IMR-90 (cell line): ENCODE measurements at regions of chr10 and their contacts with region 1.

Region 1: DNA sequence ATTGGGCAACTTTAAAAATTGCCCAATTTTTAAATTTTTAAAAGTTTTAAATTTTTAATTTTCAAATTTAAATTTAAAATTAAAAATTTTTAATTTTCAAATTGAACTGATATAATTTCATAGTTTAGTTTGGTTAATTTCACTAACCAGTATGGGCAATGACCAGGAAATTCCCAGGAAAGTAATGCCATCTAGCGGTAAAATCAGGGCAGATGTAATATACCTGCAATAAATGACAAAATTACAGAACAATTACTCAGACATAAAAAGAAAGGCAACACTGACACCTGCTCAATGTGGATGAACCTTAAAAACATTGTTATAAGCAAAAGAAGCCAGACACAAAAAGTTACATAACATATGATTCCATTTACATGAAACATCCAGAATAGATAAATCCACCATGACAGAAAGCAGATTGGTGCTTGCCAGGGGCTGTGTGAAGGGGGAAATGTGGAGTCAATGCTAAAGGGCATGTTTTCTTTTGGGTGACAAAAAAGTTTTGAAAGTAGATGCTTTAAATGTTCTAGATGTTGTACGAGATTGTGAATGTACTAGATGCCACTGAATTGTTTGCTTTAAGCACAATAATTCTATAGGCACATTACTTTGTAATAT is 28.6 kb upstream of the SLC16A12 start:
- DNase-seq: peak; percentile 60
- ATAC-seq: peak; percentile 75
- H3K4me3 ChIP-seq: no peak overlapping the region
- H3K27ac ChIP-seq: no peak overlapping the region
- H3K4me1 ChIP-seq: no peaks in the 10 kb centered on the region; the same call in 1 of the 2 replicates
- H3K27me3 ChIP-seq: no peaks in the 10 kb centered on the region
- CTCF ChIP-seq: peak; percentile 85
- POLR2A ChIP-seq: no peak; the same call in 1 of the 2 replicates
- RAD21 ChIP-seq: peak; percentile 95

Region 2: GRCh38 chr10:89466599-89467035 is 97.4 kb before region 1 on chr10:
- CTCF ChIA-PET with region 1: interaction called, 7 read pairs
- POLR2A ChIA-PET with region 1: no interaction called
- dilution Hi-C with region 1: no loop called
- in situ Hi-C with region 1: no loop called
- intact Hi-C with region 1: loop called (anchors 1 kb)
- DNase-seq: peak; percentile 60
- ATAC-seq: peak; percentile 90
- H3K4me3 ChIP-seq: no peak overlapping the region
- H3K27ac ChIP-seq: no peak overlapping the region
- H3K4me1 ChIP-seq: peaks cover 5% of the 10 kb centered on the region
- H3K27me3 ChIP-seq: no peaks in the 10 kb centered on the region
- CTCF ChIP-seq: peak; percentile 56
- POLR2A ChIP-seq: no peak
- RAD21 ChIP-seq: peak; percentile 66